ENCODE measurements at regions of chr2 and their contacts with region 1.

Region 1: DNA sequence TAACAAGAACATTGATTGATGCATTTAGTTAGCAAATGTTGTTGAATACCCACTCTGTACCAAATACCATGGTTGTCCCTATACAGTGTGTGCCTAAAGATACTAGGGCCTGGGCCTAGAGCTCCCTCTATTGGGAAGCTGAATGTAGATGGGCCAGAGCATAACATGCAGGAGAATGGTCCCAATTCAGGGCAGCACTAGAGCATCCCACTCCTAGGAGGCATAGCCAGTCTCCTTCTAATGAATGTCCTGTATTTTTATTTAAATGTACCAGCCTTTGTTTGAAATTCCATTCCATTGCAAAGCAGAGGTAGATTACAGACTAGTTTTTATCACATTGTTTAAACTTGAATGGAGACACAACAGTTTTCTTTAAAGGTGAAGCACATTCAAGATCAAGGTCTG is 90.6 kb downstream of the FEZ2 start:
- DNase-seq: peak; percentile 52
- ATAC-seq: peak; percentile 93
- H3K4me3 ChIP-seq: no peak overlapping the region
- H3K27ac ChIP-seq: peak overlapping the region; percentile 52
- H3K4me1 ChIP-seq: peaks cover 20% of the 10 kb centered on the region
- H3K27me3 ChIP-seq: no peaks in the 10 kb centered on the region
- CTCF ChIP-seq: peak; percentile 94

Region 2: GRCh38 chr2:35963824-35964223 is 543.6 kb before region 1 on chr2:
- CTCF ChIA-PET with region 1: no interaction called
- POLR2A ChIA-PET with region 1: no interaction called
- in situ Hi-C with region 1: no loop called
- intact Hi-C with region 1: no loop called
- DNase-seq: no peak
- ATAC-seq: no peak
- H3K4me3 ChIP-seq: no peak overlapping the region
- H3K27ac ChIP-seq: no peak overlapping the region
- H3K4me1 ChIP-seq: no peaks in the 10 kb centered on the region
- H3K27me3 ChIP-seq: no peaks in the 10 kb centered on the region
- CTCF ChIP-seq: no peak

Region 3: GRCh38 chr2:36459725-36460137 is 47.7 kb before region 1 on chr2:
- CTCF ChIA-PET with region 1: interaction called, 13 read pairs
- POLR2A ChIA-PET with region 1: no interaction called
- in situ Hi-C with region 1: no loop called
- intact Hi-C with region 1: no loop called
- DNase-seq: no peak
- ATAC-seq: peak; percentile 57
- H3K4me3 ChIP-seq: no peak overlapping the region
- H3K27ac ChIP-seq: peak overlapping the region; percentile 86
- H3K4me1 ChIP-seq: peaks cover 91% of the 10 kb centered on the region
- H3K27me3 ChIP-seq: no peaks in the 10 kb centered on the region
- CTCF ChIP-seq: peak; percentile 81

Region 4: GRCh38 chr2:36572054-36572718 is 64.8 kb after region 1 on chr2:
- CTCF ChIA-PET with region 1: interaction called, 11 read pairs
- POLR2A ChIA-PET with region 1: no interaction called
- in situ Hi-C with region 1: no loop called
- intact Hi-C with region 1: no loop called
- DNase-seq: no peak
- ATAC-seq: no peak
- H3K4me3 ChIP-seq: no peak overlapping the region
- H3K27ac ChIP-seq: peak overlapping the region; percentile 90
- H3K4me1 ChIP-seq: peaks cover 48% of the 10 kb centered on the region
- H3K27me3 ChIP-seq: no peaks in the 10 kb centered on the region
- CTCF ChIP-seq: no peak

Measured in Panc1 (cell line).